ENCODE measurements at regions of chr4 and their contacts with region 1.

Region 1: GRCh38 chr4:74531963-74532794 is 87.2 kb downstream of the AREG start:
- DNase-seq: no peak
- ATAC-seq: peak in 1 of 2 donors; percentile 77
- H3K4me3 ChIP-seq: no peak overlapping the region
- H3K27ac ChIP-seq: no peak overlapping the region
- H3K4me1 ChIP-seq: no peaks in the 10 kb centered on the region
- H3K27me3 ChIP-seq: no peaks in the 10 kb centered on the region
- CTCF ChIP-seq: peak in 4 of 5 experiments; percentile 4 to 49 (median 34)
- POLR2A ChIP-seq: no peak

Region 2: DNA sequence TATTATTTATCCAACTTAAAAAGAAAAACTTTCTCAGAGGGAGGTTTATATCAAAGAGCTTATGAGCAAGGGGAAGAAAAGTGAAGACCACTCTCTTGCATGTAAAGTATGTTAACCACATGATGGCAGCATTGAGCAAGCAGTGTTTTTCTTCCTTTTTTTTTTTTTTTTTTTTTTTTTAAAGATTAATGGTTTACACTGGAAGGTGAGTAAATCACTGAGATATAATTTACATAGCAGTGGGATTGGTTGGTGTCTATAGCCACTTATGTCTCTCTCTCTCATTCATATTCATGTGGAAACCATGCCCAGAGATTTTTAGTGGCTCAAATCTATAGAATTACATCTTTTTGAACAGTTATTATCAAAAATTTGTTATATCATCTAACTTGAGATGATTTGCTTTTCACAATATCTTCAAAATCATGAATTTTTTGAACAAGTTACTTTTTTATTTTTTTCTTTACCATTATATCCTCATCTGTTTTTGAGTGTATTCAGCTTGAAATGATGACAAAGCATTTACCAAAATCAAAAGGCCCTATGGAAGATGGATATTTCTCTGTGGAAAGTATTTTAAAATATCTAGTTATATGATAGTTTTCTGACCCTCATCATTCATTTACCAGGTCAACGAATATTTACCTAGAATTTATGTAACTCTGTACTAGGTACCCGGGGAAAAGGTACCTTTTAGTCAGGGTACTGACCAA is 342.7 kb before region 1 on chr4:
- in situ Hi-C with region 1: loop called in 1 of 4 experiments (anchors 25 kb)
- intact Hi-C with region 1: no loop called
- DNase-seq: no peak
- ATAC-seq: no peak
- H3K4me3 ChIP-seq: no peak overlapping the region
- H3K27ac ChIP-seq: no peak overlapping the region
- H3K4me1 ChIP-seq: no peaks in the 10 kb centered on the region
- H3K27me3 ChIP-seq: no peaks in the 10 kb centered on the region
- CTCF ChIP-seq: peak in 3 of 5 experiments; percentile 18 to 62 (median 46)
- POLR2A ChIP-seq: no peak

Region 3: GRCh38 chr4:74370912-74371311 is 161.3 kb before region 1 on chr4:
- in situ Hi-C with region 1: loop called in 3 of 4 experiments (anchors 10 kb)
- intact Hi-C with region 1: no loop called
- DNase-seq: no peak
- ATAC-seq: no peak
- H3K4me3 ChIP-seq: no peak overlapping the region
- H3K27ac ChIP-seq: no peak overlapping the region
- H3K4me1 ChIP-seq: peaks cover under 1% of the 10 kb centered on the region in 2 donors
- H3K27me3 ChIP-seq: peaks cover 0 to 9% (median 1%) of the 10 kb centered on the region in 3 donors
- CTCF ChIP-seq: no peak
- POLR2A ChIP-seq: no peak

Region 4: GRCh38 chr4:74376888-74377483 is 155.2 kb before region 1 on chr4:
- in situ Hi-C with region 1: loop called in 3 of 4 experiments (anchors 10 kb)
- intact Hi-C with region 1: loop called (anchors 1 kb)
- DNase-seq: no peak
- ATAC-seq: peak; percentile 54 to 60
- H3K4me3 ChIP-seq: no peak overlapping the region
- H3K27ac ChIP-seq: no peak overlapping the region
- H3K4me1 ChIP-seq: no peaks in the 10 kb centered on the region
- H3K27me3 ChIP-seq: no peaks in the 10 kb centered on the region
- CTCF ChIP-seq: peak; percentile 19 to 56 (median 40)
- POLR2A ChIP-seq: no peak

Region 5: DNA sequence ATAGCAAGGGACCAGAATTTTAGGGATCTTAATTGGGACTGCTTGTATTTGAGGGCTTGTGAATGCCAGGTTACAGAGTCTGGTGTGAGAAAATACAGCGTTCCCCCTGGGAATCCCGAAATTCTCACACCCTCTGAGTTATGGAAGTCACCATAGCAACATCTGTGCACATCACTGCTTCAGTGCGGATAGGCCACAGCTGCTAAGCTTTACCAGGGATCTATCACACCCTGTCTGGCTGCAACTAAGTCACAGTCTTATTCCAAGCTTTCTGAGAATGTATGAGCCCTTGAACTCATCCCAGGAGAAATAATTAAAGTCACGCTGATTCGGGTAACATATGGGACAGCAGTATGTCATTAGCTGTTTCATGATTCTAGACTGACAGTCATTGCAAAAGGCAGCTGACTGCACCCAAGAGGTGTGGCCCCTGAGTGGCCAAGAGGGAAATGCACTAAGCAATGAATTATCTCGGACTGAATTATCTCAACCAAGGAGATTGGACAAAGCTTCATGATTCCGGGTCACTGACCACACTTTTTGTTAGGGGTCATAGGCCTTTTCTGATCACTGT is 308.8 kb after region 1 on chr4:
- in situ Hi-C with region 1: no loop called
- intact Hi-C with region 1: no loop called
- DNase-seq: no peak
- ATAC-seq: no peak
- H3K4me3 ChIP-seq: no peak overlapping the region
- H3K27ac ChIP-seq: no peak overlapping the region
- H3K4me1 ChIP-seq: no peaks in the 10 kb centered on the region
- H3K27me3 ChIP-seq: no peaks in the 10 kb centered on the region
- CTCF ChIP-seq: no peak
- POLR2A ChIP-seq: no peak

Measured in gastrocnemius medialis (tissue), 4 donors.